ENCODE measurements at regions of chr14 and their contacts with region 1.

Region 1: DNA sequence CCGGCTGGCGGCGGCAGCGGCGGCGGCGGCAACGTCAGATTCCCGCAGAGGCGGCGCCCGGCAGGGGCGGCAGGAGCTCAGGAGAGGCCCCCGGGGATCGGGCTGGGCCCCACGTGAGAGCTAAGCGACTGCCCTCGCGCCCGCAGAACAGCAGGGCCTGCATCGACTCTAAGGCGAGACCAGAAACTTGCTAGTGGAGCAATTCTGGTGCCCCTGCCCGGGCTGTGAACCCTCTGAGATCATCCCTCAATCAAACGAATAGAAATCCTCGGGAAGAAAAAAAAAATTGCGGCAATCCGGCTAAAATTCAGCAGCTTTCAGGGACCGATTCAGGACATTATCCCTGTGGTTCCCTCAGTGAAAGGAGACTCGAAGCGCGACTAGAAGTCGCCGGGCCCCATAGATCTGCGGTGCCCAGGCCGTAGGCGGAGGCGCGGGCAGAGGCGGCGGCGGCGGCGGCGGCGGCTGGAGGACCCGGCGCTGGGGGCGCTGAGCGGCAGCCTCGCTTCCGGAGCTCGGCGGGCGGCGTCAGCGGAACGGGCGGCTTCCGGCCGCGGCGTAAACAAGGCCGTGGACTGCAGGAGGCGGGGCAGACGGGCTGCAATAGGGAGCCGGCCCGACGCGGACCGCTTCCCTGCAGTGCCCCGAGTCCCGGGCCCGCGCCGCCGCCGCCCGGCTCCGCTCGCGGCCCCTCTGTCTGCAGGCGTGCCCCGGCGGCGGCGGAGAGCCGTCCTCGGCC is at the start of gene KLHDC2:
- DNase-seq: peak; percentile 93
- H3K4me3 ChIP-seq: peak within 1 kb of the TSS; percentile 91 to 97 (median 96)
- H3K27ac ChIP-seq: peak within 1 kb of the TSS; percentile 93 to 99 (median 98)
- H3K4me1 ChIP-seq: peaks cover 24 to 37% (median 32%) of the 10 kb centered on the region in 4 donors
- H3K27me3 ChIP-seq: no peaks in the 10 kb centered on the region
- CTCF ChIP-seq: peak; percentile 39 to 53 (median 44)
- EP300 ChIP-seq: no peak
- POLR2A ChIP-seq: peak; percentile 47
- total RNA-seq, gene KLHDC2: 72.2 to 102 (median 85.8) TPM

Region 2: GRCh38 chr14:49692811-49693734 is 74.7 kb before region 1 on chr14 and contains the start of gene KLHDC1:
- intact Hi-C with region 1: loop called (anchors 5 kb)
- DNase-seq: peak; percentile 95
- H3K4me3 ChIP-seq: peak within 1 kb of the TSS; percentile 70 to 92 (median 83)
- H3K27ac ChIP-seq: peak within 1 kb of the TSS; percentile 93 to 99 (median 98)
- H3K4me1 ChIP-seq: peaks cover 14 to 24% (median 20%) of the 10 kb centered on the region in 4 donors
- H3K27me3 ChIP-seq: no peaks in the 10 kb centered on the region
- CTCF ChIP-seq: no peak
- EP300 ChIP-seq: no peak
- POLR2A ChIP-seq: peak; percentile 76
- total RNA-seq, gene KLHDC1: 7.6 to 8.3 (median 8.0) TPM